Dorsolateral prefrontal cortex (tissue), 120 donors: ENCODE measurements at regions of chr2 and their contacts with region 1.

Region 1: GRCh38 chr2:32772638-32773447 is 145.0 kb downstream of the TTC27 start:
- DNase-seq: peak in 1 of 10 donors; percentile 16
- H3K4me3 ChIP-seq: no peak overlapping the region
- H3K27ac ChIP-seq: peak overlapping the region in 2 of 59 donors; percentile 24 to 32
- H3K27me3 ChIP-seq: no peaks in the 10 kb centered on the region
- CTCF ChIP-seq: peak; percentile 65 to 95 (median 85)

Region 2: DNA sequence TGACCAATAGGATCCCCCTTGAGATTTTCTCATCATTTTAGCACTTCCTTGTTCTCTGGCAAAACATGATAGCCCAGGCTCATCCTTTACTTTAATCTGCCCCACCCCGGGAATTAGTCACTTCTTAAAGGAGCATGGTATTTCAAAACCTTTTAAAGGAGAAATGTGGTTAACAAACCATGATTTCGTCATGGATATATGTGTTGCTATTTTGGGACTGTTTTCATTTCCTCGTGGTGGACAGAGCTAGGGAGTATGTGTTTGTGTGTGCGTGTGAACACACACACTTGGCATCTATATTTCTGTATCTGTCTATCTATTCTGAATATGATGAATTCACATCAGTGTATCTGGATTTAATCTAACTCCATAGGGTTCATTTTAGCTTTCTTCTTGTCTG is 287.9 kb before region 1 on chr2:
- intact Hi-C with region 1: no loop called
- DNase-seq: no peak
- H3K4me3 ChIP-seq: no peak overlapping the region
- H3K27ac ChIP-seq: peak overlapping the region in 3 of 59 donors; percentile 4 to 12 (median 9)
- H3K27me3 ChIP-seq: no peaks in the 10 kb centered on the region
- CTCF ChIP-seq: no peak

Region 3: GRCh38 chr2:32553829-32554432 is 218.9 kb before region 1 on chr2:
- intact Hi-C with region 1: loop called in 1 of 2 experiments (anchors 5 kb)
- DNase-seq: no peak
- H3K4me3 ChIP-seq: no peak overlapping the region
- H3K27ac ChIP-seq: peak overlapping the region in 13 of 59 donors; percentile 5 to 61 (median 33)
- H3K27me3 ChIP-seq: no peaks in the 10 kb centered on the region
- CTCF ChIP-seq: peak; percentile 66 to 96 (median 82)

Region 4: GRCh38 chr2:32743480-32744236 is 29.2 kb before region 1 on chr2:
- intact Hi-C with region 1: no loop called
- DNase-seq: no peak
- H3K4me3 ChIP-seq: no peak overlapping the region
- H3K27ac ChIP-seq: no peak overlapping the region
- H3K27me3 ChIP-seq: no peaks in the 10 kb centered on the region
- CTCF ChIP-seq: no peak

Region 5: DNA sequence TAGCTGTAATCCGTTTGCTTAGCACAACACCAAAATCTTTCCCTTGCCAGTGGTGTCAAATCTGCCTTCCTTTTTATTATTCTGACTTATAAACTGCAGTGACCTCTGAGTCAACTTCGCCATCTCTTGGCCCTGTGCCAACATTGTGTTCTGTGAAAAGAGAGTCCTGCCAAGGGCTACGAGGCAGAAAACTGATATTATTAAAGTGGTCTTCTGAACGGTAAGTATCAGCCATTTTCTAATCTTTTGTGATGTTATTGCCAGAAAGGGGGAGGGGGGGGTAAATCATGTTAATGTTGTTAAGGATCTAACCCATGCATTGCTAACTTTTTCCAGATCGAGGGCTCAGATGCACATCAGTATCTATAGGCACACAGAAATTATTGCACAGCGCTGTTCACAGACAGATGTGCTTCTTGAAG is 52.5 kb after region 1 on chr2:
- intact Hi-C with region 1: loop called in 1 of 2 experiments (anchors 10 kb)
- DNase-seq: peak in 4 of 10 donors; percentile 28 to 65 (median 50)
- H3K4me3 ChIP-seq: peak overlapping the region in 49 of 59 donors; percentile 9 to 65 (median 34)
- H3K27ac ChIP-seq: peak overlapping the region in 57 of 59 donors; percentile 3 to 92 (median 79)
- H3K27me3 ChIP-seq: no peaks in the 10 kb centered on the region
- CTCF ChIP-seq: peak in 1 of 56 donors; percentile 15

Region 6: DNA sequence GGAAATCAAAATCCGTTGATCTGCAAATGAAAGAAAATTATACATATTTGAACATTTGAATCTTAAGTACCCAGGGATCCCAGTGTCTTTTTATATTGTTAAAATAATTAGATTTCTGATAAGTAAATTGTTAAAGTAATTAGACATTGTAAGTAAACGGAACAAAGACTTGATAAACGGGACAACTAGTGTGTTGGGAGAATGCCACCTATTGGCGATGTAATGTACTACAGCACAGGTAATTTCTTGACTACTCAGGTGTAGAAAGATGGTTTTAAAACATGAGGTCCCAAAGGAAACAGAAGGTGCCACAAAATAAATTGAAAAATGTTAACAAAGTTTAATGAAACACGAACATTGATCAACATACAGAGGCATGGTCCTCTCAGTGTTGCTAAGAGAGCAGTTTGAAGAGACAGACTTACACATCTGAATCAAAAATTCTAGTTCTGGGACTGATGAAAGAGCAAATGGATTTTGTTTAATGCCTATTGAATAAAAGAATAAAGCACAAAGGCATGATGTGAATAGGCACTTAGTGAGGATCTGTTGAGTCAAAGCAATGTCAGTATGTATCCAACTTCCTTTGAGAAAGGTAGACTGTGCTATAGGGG is 600.2 kb after region 1 on chr2:
- intact Hi-C with region 1: loop called in 1 of 2 experiments (anchors 2 kb)
- DNase-seq: no peak
- H3K4me3 ChIP-seq: peak overlapping the region in 3 of 59 donors; percentile 6 to 30 (median 22)
- H3K27ac ChIP-seq: peak overlapping the region in 10 of 59 donors; percentile 8 to 87 (median 80)
- H3K27me3 ChIP-seq: no peaks in the 10 kb centered on the region
- CTCF ChIP-seq: peak; percentile 58 to 87 (median 80)